K562 (cell line): ENCODE measurements at regions of chr15 and their contacts with region 1.

Region 1: DNA sequence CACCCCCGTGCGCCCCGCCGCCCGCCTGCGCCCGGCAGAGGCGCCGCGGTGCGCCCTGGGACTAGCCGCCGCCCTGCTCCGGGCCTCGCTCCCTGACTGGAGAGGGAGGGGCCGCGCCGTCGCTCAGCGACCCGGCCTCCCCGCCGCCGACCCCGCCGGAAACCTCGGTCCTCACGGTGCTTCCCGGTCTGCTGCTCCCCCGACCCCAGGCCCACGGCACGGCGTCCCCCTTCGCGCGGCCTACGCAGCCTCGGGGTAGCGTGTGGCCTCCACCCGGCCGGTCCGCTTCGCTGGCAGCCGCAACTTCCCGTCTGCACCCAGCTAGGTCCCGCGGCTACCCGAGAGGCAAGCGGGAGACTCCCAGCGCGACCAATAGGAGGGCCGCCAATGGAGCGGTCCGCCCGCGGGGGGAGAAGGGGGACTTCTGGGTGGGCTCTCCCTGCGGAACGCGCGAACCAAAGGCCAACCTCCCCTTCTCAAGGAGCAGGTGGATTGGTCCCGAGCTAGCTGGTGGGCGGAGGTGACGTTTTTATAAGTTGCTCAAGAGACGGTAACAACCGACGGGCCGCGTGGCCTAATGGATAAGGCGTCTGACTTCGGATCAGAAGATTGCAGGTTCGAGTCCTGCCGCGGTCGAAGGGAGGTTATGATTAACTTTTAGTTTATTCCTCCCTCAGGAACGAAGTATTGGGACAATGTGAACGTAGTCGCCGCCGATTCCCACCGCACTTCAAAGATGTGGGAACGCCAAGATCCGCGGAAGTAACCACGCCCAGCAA is at the start of gene POLG:
- DNase-seq: peak; percentile 96 to 98 (median 97)
- ATAC-seq: peak; percentile 96
- H3K4me3 ChIP-seq: peak within 1 kb of the TSS; percentile 88
- H3K27ac ChIP-seq: peak within 1 kb of the TSS; percentile 85
- H3K4me1 ChIP-seq: peaks cover 13 to 30% of the 10 kb centered on the region in 2 experiments; a peak in 4 of 5 replicates
- H3K27me3 ChIP-seq: peaks cover 0 to 3% of the 10 kb centered on the region in 2 experiments; a peak in 1 of 5 replicates
- CTCF ChIP-seq: peak in 1 of 3 experiments; percentile 6; a peak in 1 of 6 replicates
- EP300 ChIP-seq: peak; percentile 84
- POLR2A ChIP-seq: peak; percentile 98
- RAD21 ChIP-seq: no peak
- polyA plus RNA-seq, gene POLG: 15.2 to 20.8 TPM

Region 2: GRCh38 chr15:89323825-89324224 is 10.9 kb before region 1 on chr15:
- CTCF ChIA-PET with region 1: no interaction called
- POLR2A ChIA-PET with region 1: interaction called, 25 read pairs
- in situ Hi-C with region 1: no loop called
- intact Hi-C with region 1: no loop called
- DNase-seq: no peak
- ATAC-seq: no peak
- H3K4me3 ChIP-seq: no peak overlapping the region
- H3K27ac ChIP-seq: no peak overlapping the region
- H3K4me1 ChIP-seq: peaks cover 0 to 5% of the 10 kb centered on the region in 2 experiments; a peak in 1 of 5 replicates
- H3K27me3 ChIP-seq: no peaks in the 10 kb centered on the region
- CTCF ChIP-seq: no peak
- EP300 ChIP-seq: no peak
- POLR2A ChIP-seq: no peak
- RAD21 ChIP-seq: no peak

Region 3: DNA sequence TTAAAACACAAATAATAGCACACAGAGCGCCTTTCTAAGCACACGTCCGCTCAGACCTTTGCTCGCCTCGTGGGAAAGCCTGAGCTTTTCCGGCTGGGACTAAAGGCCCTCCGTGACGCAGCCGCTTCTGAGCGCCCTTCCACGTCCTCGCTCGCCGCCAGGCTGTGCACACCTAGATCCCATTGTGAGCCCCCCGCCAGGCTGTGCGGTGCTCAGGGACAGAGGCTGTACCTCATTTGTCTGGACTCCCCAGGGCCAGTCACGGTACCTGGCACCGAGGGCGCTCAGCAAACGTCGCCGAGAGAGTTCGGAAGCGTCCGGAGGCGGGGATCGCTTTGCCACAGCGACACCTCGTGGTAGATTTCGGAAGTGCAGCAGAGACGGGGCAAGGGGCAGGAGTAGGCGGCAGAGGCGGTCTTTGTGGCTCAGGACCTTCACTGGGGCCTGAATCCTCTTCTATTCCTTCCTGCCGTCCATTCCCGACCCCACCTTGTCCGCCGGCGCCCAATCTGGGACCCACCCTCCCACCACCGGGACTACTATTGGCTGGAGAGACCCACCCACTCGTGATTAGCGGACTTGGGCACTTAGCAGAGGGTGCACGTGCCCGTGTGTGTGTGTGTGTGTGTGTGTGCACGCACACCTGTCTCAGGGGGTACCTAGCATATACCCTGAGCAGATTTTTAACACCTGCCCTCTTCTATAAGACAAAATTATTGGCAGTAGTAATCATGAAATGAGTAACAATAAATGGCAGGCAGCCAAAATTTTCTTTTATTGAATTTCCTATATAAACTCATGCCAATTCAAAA is 96.0 kb after region 1 on chr15:
- CTCF ChIA-PET with region 1: no interaction called
- POLR2A ChIA-PET with region 1: no interaction called
- in situ Hi-C with region 1: no loop called
- intact Hi-C with region 1: no loop called
- DNase-seq: peak; percentile 84 to 92 (median 88)
- ATAC-seq: peak; percentile 99
- H3K4me3 ChIP-seq: peak overlapping the region; percentile 17
- H3K27ac ChIP-seq: no peak overlapping the region
- H3K4me1 ChIP-seq: peaks cover 0 to 7% of the 10 kb centered on the region in 2 experiments; a peak in 2 of 5 replicates
- H3K27me3 ChIP-seq: peaks cover 3 to 26% of the 10 kb centered on the region in 2 experiments; a peak in 3 of 5 replicates
- CTCF ChIP-seq: peak; percentile 94 to 97 (median 95)
- EP300 ChIP-seq: no peak
- POLR2A ChIP-seq: no peak
- RAD21 ChIP-seq: peak; percentile 77 to 87